CD4-positive, alpha-beta T cell (primary cell): ENCODE measurements at regions of chr5 and their contacts with region 1.

Region 1: GRCh38 chr5:151115274-151115905 is 34.6 kb upstream of the TNIP1 start:
- DNase-seq: peak; percentile 51 to 84 (median 70)
- ATAC-seq: peak; percentile 94
- H3K4me3 ChIP-seq: no peak overlapping the region
- H3K4me3 Mint-ChIP-seq: no peak overlapping the region
- H3K27ac ChIP-seq: no peak overlapping the region
- H3K27ac Mint-ChIP-seq: peak overlapping the region; percentile 47
- H3K4me1 ChIP-seq: peaks cover 6% of the 10 kb centered on the region
- H3K4me1 Mint-ChIP-seq: peaks cover 21% of the 10 kb centered on the region
- H3K27me3 ChIP-seq: no peaks in the 10 kb centered on the region
- H3K27me3 Mint-ChIP-seq: no peaks in the 10 kb centered on the region
- CTCF ChIP-seq: peak; percentile 97

Region 2: GRCh38 chr5:150560401-150561193 is 554.8 kb before region 1 on chr5:
- CTCF ChIA-PET with region 1: no interaction called
- POLR2A ChIA-PET with region 1: no interaction called
- intact Hi-C with region 1: loop called (anchors 1 to 10 kb)
- DNase-seq: peak; percentile 58 to 93 (median 82)
- ATAC-seq: peak; percentile 98
- H3K4me3 ChIP-seq: no peak overlapping the region
- H3K4me3 Mint-ChIP-seq: no peak overlapping the region
- H3K27ac ChIP-seq: no peak overlapping the region
- H3K27ac Mint-ChIP-seq: no peak overlapping the region
- H3K4me1 ChIP-seq: no peaks in the 10 kb centered on the region
- H3K4me1 Mint-ChIP-seq: no peaks in the 10 kb centered on the region
- H3K27me3 ChIP-seq: no peaks in the 10 kb centered on the region
- H3K27me3 Mint-ChIP-seq: no peaks in the 10 kb centered on the region
- CTCF ChIP-seq: peak; percentile 88

Region 3: DNA sequence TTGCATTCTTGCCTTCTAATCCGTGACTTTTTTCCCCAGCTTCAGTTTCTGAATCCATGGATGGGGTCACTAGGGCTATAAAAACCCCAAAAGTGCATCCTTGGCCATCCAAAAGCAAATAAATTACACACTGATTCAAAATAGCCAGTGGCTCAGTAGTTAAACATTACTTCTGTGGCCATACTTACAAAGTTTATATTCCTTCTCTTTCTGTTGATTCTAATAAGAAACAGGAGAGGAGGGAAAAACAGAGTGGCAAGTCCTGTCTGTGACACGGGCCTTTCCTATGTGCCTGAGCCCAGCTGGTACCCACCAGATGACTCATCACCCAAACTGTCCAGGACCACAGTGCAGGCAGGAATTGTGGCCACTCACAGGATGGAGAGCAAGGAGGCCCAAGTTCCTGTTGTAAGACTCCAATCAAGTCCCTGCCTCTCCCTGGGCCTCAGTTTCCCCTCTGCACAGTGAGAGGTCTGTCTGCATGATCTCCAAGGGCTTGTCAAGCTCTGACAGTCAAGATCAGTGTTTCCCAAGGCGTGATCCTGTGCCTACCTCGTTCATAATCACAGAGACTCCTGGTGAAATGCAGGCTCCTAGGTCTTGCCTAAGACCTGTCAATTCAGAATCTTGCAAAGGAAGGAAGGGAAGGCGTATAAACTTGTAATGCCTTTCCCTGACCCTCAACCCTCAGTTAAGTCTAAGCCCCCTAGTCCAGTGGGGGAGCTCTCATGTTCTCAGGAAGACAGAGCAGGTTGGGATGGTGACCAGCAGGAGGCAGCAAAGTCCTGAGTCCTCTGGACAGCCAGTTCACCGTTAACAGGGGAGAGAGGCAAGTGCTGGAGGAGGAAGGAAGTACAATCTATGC is 64.1 kb before region 1 on chr5:
- CTCF ChIA-PET with region 1: interaction called, 126 read pairs
- POLR2A ChIA-PET with region 1: interaction called, 15 read pairs
- intact Hi-C with region 1: loop called (anchors 1 kb)
- DNase-seq: peak; percentile 58 to 85 (median 65)
- ATAC-seq: peak; percentile 77
- H3K4me3 ChIP-seq: no peak overlapping the region
- H3K4me3 Mint-ChIP-seq: no peak overlapping the region
- H3K27ac ChIP-seq: no peak overlapping the region
- H3K27ac Mint-ChIP-seq: peak overlapping the region; percentile 41
- H3K4me1 ChIP-seq: peaks cover 7% of the 10 kb centered on the region
- H3K4me1 Mint-ChIP-seq: peaks cover 12% of the 10 kb centered on the region
- H3K27me3 ChIP-seq: no peaks in the 10 kb centered on the region
- H3K27me3 Mint-ChIP-seq: no peaks in the 10 kb centered on the region
- CTCF ChIP-seq: peak; percentile 74

Region 4: DNA sequence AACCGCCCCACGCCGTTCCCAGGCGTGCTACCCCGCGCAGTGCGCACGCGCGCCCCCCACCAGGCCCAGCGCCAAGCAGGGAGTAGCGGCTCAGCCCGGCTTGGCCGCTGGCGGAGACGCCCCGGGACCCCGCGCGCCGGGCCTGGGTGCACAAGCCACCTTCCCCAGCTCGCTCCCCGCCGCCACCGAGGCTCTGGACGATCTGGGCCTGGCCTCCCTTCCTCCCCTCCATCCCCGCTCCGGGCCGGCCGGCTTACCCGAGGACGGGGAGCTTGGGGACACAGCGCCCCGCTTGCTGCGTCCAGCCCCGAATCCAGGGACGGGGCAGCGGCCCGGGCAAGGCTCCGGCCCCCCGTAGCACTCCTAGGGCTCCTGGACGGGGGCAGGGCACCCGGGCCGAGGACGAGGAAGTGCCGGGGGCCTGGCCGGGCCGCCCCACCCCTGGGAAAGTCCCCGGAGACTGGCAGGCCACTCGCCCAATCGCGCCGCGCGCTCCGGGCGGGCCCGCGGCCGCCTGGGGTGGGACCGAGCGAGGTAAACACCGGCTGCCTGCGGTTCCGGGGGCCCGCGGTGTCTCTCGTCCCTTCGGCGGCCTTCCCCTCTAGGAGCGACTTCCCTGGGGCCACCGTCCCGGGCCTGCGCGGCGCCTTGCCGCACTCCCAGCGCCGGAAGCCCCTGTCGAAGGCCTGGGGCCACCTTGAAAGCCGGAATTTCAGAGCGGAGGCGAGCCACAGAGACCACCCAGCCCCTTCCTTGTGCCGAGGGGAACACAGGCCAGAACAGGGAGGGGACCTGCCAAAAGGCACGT is 34.6 kb before region 1 on chr5 and contains the start of gene TNIP1:
- CTCF ChIA-PET with region 1: interaction called, 13 read pairs
- POLR2A ChIA-PET with region 1: interaction called, 8 read pairs
- intact Hi-C with region 1: no loop called
- DNase-seq: peak; percentile 86 to 97 (median 92)
- ATAC-seq: peak; percentile 78
- H3K4me3 ChIP-seq: peak within 1 kb of the TSS; percentile 85
- H3K4me3 Mint-ChIP-seq: peak within 1 kb of the TSS; percentile 97
- H3K27ac ChIP-seq: peak within 1 kb of the TSS; percentile 97
- H3K27ac Mint-ChIP-seq: peak within 1 kb of the TSS; percentile 87
- H3K4me1 ChIP-seq: peaks cover 88% of the 10 kb centered on the region
- H3K4me1 Mint-ChIP-seq: peaks cover 89% of the 10 kb centered on the region
- H3K27me3 ChIP-seq: no peaks in the 10 kb centered on the region
- H3K27me3 Mint-ChIP-seq: no peaks in the 10 kb centered on the region
- CTCF ChIP-seq: no peak
- total RNA-seq, gene TNIP1: 110 to 115 TPM

Region 5: DNA sequence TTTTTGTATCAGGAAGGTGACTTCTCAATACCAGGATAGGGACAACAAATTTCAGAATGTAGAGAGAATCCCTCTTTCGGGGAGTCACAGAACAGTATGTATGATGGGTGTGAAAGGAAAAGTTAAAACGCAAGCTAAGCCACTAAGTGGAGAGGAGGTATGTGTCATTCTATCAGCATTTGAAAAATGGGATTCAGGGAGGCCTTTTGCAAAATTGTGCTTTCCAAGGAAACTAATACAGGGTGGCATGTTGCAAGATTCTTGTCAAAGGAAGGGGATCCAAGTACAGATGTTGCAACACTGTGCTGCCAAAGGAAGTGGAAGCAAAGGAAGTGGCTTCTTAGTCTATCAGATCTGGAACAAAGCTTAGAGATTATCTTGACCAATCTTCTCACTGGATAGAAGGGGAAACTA is 21.9 kb before region 1 on chr5:
- CTCF ChIA-PET with region 1: interaction called, 12 read pairs
- POLR2A ChIA-PET with region 1: interaction called, 3 read pairs
- intact Hi-C with region 1: no loop called
- DNase-seq: peak in 3 of 14 experiments; percentile 59 to 71 (median 63)
- ATAC-seq: peak; percentile 18
- H3K4me3 ChIP-seq: no peak overlapping the region
- H3K4me3 Mint-ChIP-seq: peak overlapping the region; percentile 40
- H3K27ac ChIP-seq: peak overlapping the region; percentile 48
- H3K27ac Mint-ChIP-seq: peak overlapping the region; percentile 80
- H3K4me1 ChIP-seq: peaks cover 54% of the 10 kb centered on the region
- H3K4me1 Mint-ChIP-seq: peaks cover 73% of the 10 kb centered on the region
- H3K27me3 ChIP-seq: no peaks in the 10 kb centered on the region
- H3K27me3 Mint-ChIP-seq: no peaks in the 10 kb centered on the region
- CTCF ChIP-seq: no peak

Region 6: GRCh38 chr5:151164686-151165392 is 49.4 kb after region 1 on chr5:
- CTCF ChIA-PET with region 1: interaction called, 27 read pairs
- POLR2A ChIA-PET with region 1: interaction called, 7 read pairs
- intact Hi-C with region 1: no loop called
- DNase-seq: peak; percentile 68 to 91 (median 78)
- ATAC-seq: peak; percentile 99
- H3K4me3 ChIP-seq: no peak overlapping the region
- H3K4me3 Mint-ChIP-seq: peak overlapping the region; percentile 3
- H3K27ac ChIP-seq: no peak overlapping the region
- H3K27ac Mint-ChIP-seq: peak overlapping the region; percentile 3
- H3K4me1 ChIP-seq: peaks cover 12% of the 10 kb centered on the region
- H3K4me1 Mint-ChIP-seq: peaks cover 36% of the 10 kb centered on the region
- H3K27me3 ChIP-seq: no peaks in the 10 kb centered on the region
- H3K27me3 Mint-ChIP-seq: no peaks in the 10 kb centered on the region
- CTCF ChIP-seq: peak; percentile 93